ENCODE measurements at regions of chr3 and their contacts with region 1.

Region 1: DNA sequence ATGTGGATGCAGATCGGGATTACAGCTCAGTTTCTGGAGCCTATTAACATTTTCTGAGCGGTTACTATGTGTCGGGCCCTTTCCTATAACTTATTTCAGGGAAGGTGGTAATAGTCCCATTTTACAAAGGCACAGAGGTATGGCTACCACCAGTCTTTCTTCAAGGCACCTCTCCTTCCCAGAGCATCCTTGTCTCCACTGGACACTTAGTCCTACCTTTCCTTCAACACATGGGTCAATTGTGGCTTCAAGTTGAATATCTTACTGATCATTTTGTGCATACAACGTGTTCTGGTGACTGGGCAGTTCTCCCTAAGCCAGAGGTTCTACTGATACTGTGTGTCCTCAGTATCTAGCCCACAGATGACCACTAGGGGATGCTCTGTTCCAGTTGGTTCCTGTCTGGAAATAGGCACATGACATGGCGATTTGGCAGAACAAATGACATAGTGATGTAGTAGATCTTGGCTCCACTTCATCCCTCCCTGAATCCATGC is 60.7 kb upstream of the CMTM8 start:
- DNase-seq: peak; percentile 49
- H3K4me3 ChIP-seq: no peak overlapping the region; a peak in 1 of 4 replicates
- H3K27ac ChIP-seq: no peak overlapping the region
- H3K4me1 ChIP-seq: no peaks in the 10 kb centered on the region; a peak in 1 of 4 replicates
- H3K27me3 ChIP-seq: no peaks in the 10 kb centered on the region
- CTCF ChIP-seq: peak; percentile 80
- EP300 ChIP-seq: no peak
- RAD21 ChIP-seq: peak; percentile 75

Region 2: DNA sequence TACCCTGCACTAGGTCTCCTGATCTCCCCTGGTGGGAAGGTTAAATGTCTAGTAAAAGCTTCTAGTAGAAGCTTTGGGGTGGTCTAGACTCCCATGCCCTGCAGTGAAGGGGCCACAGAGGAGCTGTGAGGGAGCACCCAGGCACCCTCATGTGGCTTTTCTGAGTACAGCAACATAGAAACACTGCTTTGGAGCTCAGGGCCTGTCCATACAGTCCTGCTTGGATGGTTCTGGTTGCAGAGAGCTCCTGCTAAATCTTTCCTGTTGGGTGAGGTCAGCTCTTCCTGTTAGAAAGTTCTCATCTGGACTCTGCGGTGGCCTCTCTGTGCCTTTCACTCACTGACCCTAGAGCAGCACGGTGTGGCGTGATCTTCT is 23.6 kb before region 1 on chr3:
- CTCF ChIA-PET with region 1: interaction called, 12 read pairs
- POLR2A ChIA-PET with region 1: no interaction called
- DNase-seq: no peak
- H3K4me3 ChIP-seq: no peak overlapping the region
- H3K27ac ChIP-seq: no peak overlapping the region
- H3K4me1 ChIP-seq: no peaks in the 10 kb centered on the region
- H3K27me3 ChIP-seq: no peaks in the 10 kb centered on the region
- CTCF ChIP-seq: peak; percentile 14; the same call in 1 of the 2 replicates
- EP300 ChIP-seq: no peak
- RAD21 ChIP-seq: no peak

Region 3: GRCh38 chr3:32160706-32161214 is 17.0 kb before region 1 on chr3:
- CTCF ChIA-PET with region 1: interaction called, 12 read pairs
- POLR2A ChIA-PET with region 1: no interaction called
- DNase-seq: no peak
- H3K4me3 ChIP-seq: no peak overlapping the region
- H3K27ac ChIP-seq: no peak overlapping the region
- H3K4me1 ChIP-seq: no peaks in the 10 kb centered on the region
- H3K27me3 ChIP-seq: no peaks in the 10 kb centered on the region
- CTCF ChIP-seq: no peak
- EP300 ChIP-seq: no peak
- RAD21 ChIP-seq: no peak

Region 4: DNA sequence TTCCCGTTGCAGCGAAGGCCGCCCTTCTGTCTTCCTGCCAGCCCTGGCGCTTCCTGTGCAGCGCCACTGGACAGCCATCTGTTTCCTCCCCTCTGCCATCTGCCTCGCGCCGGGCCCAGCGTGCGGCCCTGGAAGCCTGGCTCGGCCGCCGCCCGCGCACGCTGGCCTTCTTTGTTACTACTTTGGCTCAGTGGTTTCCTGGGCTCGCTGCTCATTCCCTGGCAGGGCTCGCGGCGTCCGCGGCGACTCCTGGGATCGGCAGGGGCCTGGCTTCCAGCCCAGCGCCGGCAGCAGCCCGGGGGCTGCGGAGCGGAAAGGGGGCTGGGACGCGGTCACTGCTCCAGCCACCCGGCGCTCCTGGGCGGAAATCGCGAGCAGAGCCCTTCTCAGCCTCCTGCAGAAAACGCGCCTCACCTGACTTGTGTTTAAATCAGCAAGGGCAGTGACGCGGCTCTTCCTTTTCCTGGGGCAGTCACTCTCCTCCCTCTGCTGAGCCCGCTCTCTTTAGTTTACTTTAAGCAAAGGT is 223.9 kb after region 1 on chr3:
- CTCF ChIA-PET with region 1: interaction called, 11 read pairs
- POLR2A ChIA-PET with region 1: no interaction called
- DNase-seq: peak; percentile 91
- H3K4me3 ChIP-seq: peak overlapping the region; percentile 40 to 54
- H3K27ac ChIP-seq: peak overlapping the region; percentile 76 to 97
- H3K4me1 ChIP-seq: peaks cover 7 to 8% of the 10 kb centered on the region in 2 experiments; a peak in 3 of 4 replicates
- H3K27me3 ChIP-seq: no peaks in the 10 kb centered on the region
- CTCF ChIP-seq: no peak
- EP300 ChIP-seq: no peak
- RAD21 ChIP-seq: no peak

Region 5: DNA sequence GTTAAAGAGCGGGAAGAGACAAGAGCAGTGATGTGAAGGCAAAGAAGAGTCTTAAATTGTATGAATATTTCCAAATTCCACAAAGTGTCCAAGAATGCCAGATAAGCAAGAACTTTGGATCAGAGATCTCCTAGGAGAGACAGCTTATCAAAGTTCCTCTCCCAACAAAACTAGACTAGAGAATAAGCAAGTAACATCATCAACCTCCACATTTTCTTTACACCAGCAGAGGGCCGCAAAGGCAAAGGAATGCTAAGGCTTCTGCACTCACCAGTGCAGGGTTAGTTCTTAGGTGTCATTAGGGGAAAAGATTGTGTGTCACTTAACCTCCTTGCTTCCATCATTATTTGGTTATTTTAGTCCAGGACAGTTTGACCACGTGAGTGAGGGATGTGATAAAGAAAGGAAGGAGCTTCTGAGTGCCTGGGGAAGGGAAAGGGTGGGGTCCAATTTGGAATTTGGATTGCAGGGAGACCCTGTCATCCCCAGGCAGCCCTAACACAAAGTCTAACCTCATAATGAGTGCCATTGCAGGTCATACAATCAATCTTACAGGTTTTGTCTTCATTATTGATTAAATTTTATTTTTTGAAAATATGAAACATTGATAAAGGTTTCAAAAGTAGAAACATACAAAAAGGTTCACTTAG is 332.4 kb after region 1 on chr3:
- CTCF ChIA-PET with region 1: no interaction called
- POLR2A ChIA-PET with region 1: no interaction called
- DNase-seq: peak; percentile 71
- H3K4me3 ChIP-seq: no peak overlapping the region; a peak in 1 of 4 replicates
- H3K27ac ChIP-seq: no peak overlapping the region
- H3K4me1 ChIP-seq: no peaks in the 10 kb centered on the region; a peak in 1 of 4 replicates
- H3K27me3 ChIP-seq: no peaks in the 10 kb centered on the region
- CTCF ChIP-seq: peak; percentile 82
- EP300 ChIP-seq: no peak
- RAD21 ChIP-seq: peak; percentile 97

Measured in SK-N-SH (cell line).